ENCODE measurements at regions of chr9 and their contacts with region 1.

Region 1: DNA sequence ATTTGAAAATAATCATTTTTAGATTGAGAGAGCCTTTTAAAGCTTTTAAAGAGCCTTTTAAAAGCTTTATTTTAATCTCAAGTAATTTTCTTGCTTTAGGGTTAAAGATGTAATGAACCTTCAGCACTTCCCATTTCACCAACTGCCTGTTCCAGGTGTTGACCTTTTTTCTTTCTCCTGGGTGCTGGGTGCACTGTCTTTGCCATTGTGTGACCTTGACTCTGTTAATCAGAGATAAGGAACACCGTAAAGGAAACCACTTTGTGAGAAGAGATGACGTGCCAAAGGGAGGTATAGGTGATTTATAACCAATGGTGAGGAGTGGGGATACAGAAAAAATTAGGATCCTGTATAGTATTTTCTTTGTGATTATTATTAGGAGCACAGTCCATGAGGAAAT is 68.2 kb downstream of the NAA35 start:
- DNase-seq: no peak
- H3K4me3 ChIP-seq: no peak overlapping the region
- H3K27ac ChIP-seq: no peak overlapping the region
- H3K4me1 ChIP-seq: no peaks in the 10 kb centered on the region
- H3K27me3 ChIP-seq: no peaks in the 10 kb centered on the region
- CTCF ChIP-seq: no peak

Region 2: DNA sequence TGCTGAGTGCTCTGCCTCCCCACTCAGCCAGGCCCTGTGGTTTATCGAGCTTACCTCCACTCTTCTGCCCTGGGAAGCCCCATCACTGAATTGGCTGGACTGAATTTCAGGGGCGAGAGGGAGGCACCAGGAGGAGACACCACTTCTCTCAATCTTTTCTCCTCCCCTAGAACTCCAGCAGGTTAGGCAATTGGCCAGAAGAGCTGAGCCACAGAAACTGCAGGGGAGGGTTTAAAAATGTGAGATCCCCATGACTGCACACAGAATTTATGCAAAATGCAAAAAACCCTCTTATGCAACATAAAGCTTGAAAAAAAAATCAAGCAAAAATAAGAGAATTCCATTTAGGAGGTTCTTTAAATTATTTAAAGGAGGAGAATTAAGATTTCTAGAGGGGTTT is 315.2 kb after region 1 on chr9:
- intact Hi-C with region 1: loop called (anchors 10 kb)
- DNase-seq: no peak
- H3K4me3 ChIP-seq: no peak overlapping the region
- H3K27ac ChIP-seq: no peak overlapping the region
- H3K4me1 ChIP-seq: no peaks in the 10 kb centered on the region
- H3K27me3 ChIP-seq: no peaks in the 10 kb centered on the region
- CTCF ChIP-seq: no peak

Region 3: GRCh38 chr9:86598411-86599239 is 589.5 kb after region 1 on chr9:
- intact Hi-C with region 1: no loop called
- DNase-seq: no peak
- H3K4me3 ChIP-seq: no peak overlapping the region
- H3K27ac ChIP-seq: no peak overlapping the region
- H3K4me1 ChIP-seq: no peaks in the 10 kb centered on the region
- H3K27me3 ChIP-seq: no peaks in the 10 kb centered on the region
- CTCF ChIP-seq: no peak